Common myeloid progenitor, CD34-positive (primary cell): ENCODE measurements at regions of chr7 and their contacts with region 1.

Region 1: DNA sequence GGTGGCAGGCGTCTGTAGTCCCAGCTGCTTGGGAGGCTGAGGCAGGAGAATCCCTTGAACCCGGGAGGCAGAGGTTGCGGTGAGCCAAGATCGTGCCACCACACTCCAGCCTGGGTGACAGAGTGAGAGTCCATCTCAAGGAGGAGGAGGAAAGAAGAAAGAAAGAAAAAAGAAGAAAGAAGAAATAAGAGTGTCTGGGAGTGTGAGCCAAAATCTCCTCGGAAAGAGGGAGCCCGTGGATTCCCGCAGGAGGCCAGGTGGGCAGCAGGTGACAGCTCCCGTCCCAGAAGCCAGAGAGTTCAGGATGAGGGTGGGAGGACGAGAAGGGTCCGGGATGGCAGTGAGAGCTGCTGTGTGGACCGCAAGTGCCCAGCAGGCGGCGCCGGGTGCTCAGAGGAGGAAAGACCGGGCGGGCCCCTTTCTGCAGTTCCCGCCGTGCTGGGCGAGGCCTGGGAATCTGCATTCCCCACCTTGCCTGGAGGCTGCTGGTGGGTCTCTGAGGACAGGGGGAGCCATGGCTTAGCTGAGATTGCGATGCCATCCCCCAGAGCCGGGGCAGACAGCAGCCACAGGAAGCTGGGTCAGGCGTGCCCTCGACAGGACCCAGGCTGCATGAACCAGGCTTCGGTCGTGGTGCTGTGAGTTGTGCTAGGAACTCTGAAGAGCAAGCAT is 17.1 kb upstream of the AMZ1 start:
- DNase-seq: peak; percentile 65 to 75 (median 71)
- H3K4me3 ChIP-seq: no peak overlapping the region
- H3K27ac ChIP-seq: no peak overlapping the region
- H3K4me1 ChIP-seq: peaks cover 0 to 6% (median 4%) of the 10 kb centered on the region in 4 experiments
- H3K27me3 ChIP-seq: no peaks in the 10 kb centered on the region

Region 2: GRCh38 chr7:2321020-2321419 is 349.8 kb before region 1 on chr7:
- CTCF ChIA-PET with region 1: no interaction called
- POLR2A ChIA-PET with region 1: no interaction called
- DNase-seq: no peak
- H3K4me3 ChIP-seq: no peak overlapping the region
- H3K27ac ChIP-seq: no peak overlapping the region
- H3K4me1 ChIP-seq: peaks cover 0 to 34% (median 18%) of the 10 kb centered on the region in 4 experiments
- H3K27me3 ChIP-seq: no peaks in the 10 kb centered on the region

Region 3: DNA sequence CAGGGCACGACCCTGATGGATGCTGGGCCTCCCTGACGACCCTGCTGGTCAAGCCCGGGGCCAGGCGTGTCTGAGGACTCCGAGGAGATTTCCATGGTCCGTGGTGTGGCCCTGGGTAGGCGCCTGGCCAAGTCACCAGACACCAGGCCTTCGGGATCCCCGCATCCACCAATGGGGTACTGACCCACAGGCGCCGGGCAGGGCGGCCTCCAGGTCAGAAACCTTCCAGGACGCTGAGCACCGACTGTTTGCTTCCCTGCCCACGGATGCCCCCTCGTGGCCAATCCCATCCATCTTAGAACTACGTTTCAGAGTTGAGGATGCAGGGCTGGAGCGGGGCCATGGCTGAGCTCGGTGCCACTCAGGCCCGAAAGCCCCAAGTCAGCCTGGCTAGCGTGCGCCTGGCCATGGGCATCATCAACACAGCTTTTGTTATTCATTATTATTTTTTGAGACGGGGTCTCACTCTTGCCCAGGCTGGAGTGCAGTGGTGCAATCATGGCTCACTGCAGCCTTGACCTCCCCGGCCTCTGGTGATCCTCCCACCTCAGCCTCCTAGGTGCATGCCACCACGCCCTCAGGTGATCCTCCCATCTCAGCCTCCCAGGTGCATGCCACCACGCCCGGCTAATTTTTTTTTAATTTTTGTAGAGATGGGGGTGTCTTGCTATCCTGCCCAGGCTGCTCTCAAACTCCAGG is 10.1 kb after region 1 on chr7:
- CTCF ChIA-PET with region 1: interaction called, 18 read pairs
- POLR2A ChIA-PET with region 1: no interaction called
- DNase-seq: peak; percentile 49 to 67 (median 60)
- H3K4me3 ChIP-seq: no peak overlapping the region
- H3K27ac ChIP-seq: no peak overlapping the region
- H3K4me1 ChIP-seq: peaks cover 0 to 4% (median 1%) of the 10 kb centered on the region in 4 experiments
- H3K27me3 ChIP-seq: peaks cover 0 to 2% (median 0%) of the 10 kb centered on the region in 5 experiments

Region 4: GRCh38 chr7:2688409-2689331 is 17.8 kb after region 1 on chr7:
- CTCF ChIA-PET with region 1: interaction called, 18 read pairs
- POLR2A ChIA-PET with region 1: no interaction called
- DNase-seq: peak in 2 of 3 donors; percentile 37 to 52
- H3K4me3 ChIP-seq: peak overlapping the region in 6 of 7 experiments; percentile 10 to 61 (median 44)
- H3K27ac ChIP-seq: no peak overlapping the region
- H3K4me1 ChIP-seq: peaks cover 0 to 38% (median 27%) of the 10 kb centered on the region in 4 experiments
- H3K27me3 ChIP-seq: peaks cover 0 to 44% (median 16%) of the 10 kb centered on the region in 5 experiments